Heart left ventricle (tissue), 16 donors: ENCODE measurements at regions of chr15 and their contacts with region 1.

Region 1: DNA sequence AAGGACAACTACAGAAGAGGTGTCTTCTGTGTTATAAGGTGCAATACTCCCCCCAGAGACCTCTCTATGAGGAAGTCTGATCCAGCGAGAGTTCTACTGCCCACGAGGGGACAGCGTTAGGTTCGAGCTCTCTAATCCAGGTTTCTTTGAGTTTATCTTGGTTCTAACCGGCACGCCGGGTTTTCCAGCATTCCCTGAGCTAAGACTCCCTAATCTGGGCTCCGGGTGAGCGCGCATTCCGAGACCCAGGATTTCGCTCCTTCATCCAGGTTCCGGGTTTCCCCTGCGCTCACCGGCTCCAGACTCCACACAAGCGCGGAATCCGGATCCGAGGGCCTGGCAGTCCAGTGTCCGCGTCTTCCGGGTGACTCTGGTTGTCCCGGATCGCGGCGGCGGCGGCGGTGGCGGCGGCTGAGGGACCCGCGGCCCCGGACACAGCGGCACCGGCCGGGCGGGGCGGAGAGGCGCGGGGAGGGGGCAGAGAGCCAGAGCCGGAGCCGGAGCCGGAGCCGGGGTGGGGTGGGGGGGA is at the start of gene ZNF609:
- DNase-seq: peak; percentile 93 to 96 (median 94)
- ATAC-seq: peak; percentile 75 to 92 (median 84)
- H3K4me3 ChIP-seq: peak within 1 kb of the TSS; percentile 56 to 89 (median 73)
- H3K27ac ChIP-seq: peak within 1 kb of the TSS; percentile 67 to 94 (median 84)
- H3K4me1 ChIP-seq: peaks cover 9 to 69% (median 37%) of the 10 kb centered on the region in 12 donors
- H3K27me3 ChIP-seq: no peaks in the 10 kb centered on the region
- CTCF ChIP-seq: no peak
- POLR2A ChIP-seq: peak in 1 of 2 donors; percentile 57
- total RNA-seq, gene ZNF609: 12.2 to 24.5 (median 17.2) TPM

Region 2: DNA sequence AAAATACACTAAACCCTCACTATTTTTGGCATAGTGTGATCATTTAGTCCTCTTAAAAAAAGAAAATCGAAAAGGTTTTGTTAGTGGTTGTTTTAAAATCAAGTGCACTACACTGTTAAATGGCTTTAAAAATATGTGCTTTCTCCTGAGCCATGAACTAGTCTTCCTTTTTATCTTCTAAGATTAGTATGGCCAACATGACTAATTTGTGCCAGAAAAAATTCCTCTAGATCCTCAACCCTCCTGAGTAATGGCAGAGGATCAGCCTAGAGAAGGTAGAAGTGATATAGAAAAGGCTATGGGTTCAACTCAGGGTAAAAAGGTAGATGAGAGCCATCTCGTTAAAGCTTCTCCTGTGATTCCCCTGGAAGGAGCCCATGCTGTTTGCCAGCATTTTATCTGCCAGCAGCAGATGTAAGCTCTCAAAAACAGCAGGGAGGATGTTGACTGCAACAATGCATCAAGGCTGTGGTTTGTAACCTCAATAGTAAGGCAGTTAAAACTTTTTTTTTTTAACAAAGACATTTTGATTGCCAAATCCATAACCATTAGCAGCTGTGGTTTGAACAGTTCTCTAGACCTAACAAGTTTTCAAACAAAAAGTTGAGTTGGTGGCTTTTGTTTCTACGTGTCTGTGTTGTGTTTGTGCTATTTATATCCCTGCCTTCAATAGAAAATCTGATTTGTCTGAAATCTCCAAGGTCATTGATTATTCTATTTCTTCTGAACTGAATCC is 30.1 kb before region 1 on chr15:
- intact Hi-C with region 1: no loop called
- DNase-seq: peak in 4 of 5 donors; percentile 22 to 42 (median 28)
- ATAC-seq: peak in 3 of 4 donors; percentile 70 to 75 (median 72)
- H3K4me3 ChIP-seq: no peak overlapping the region
- H3K27ac ChIP-seq: peak overlapping the region in 8 of 12 donors; percentile 11 to 68 (median 40)
- H3K4me1 ChIP-seq: peaks cover 0 to 20% (median 11%) of the 10 kb centered on the region in 12 donors
- H3K27me3 ChIP-seq: no peaks in the 10 kb centered on the region
- CTCF ChIP-seq: no peak
- POLR2A ChIP-seq: no peak

Region 3: GRCh38 chr15:64507293-64507802 is 47.1 kb after region 1 on chr15:
- intact Hi-C with region 1: loop called in 2 of 10 experiments (anchors 5 kb)
- DNase-seq: peak; percentile 68 to 83 (median 75)
- ATAC-seq: peak; percentile 89 to 100 (median 96)
- H3K4me3 ChIP-seq: no peak overlapping the region
- H3K27ac ChIP-seq: peak overlapping the region in 10 of 12 donors; percentile 15 to 64 (median 31)
- H3K4me1 ChIP-seq: peaks cover 2 to 56% (median 35%) of the 10 kb centered on the region in 12 donors
- H3K27me3 ChIP-seq: no peaks in the 10 kb centered on the region
- CTCF ChIP-seq: no peak
- POLR2A ChIP-seq: no peak

Region 4: GRCh38 chr15:64634576-64635498 is 174.6 kb after region 1 on chr15:
- intact Hi-C with region 1: loop called in 1 of 10 experiments (anchors 5 kb)
- DNase-seq: no peak
- ATAC-seq: no peak
- H3K4me3 ChIP-seq: no peak overlapping the region
- H3K27ac ChIP-seq: peak overlapping the region in 9 of 12 donors; percentile 14 to 64 (median 40)
- H3K4me1 ChIP-seq: peaks cover 7 to 68% (median 28%) of the 10 kb centered on the region in 12 donors
- H3K27me3 ChIP-seq: no peaks in the 10 kb centered on the region
- CTCF ChIP-seq: no peak
- POLR2A ChIP-seq: no peak